ENCODE measurements at regions of chr5 and their contacts with region 1.

Region 1: GRCh38 chr5:152349683-152350526 is 55.2 kb downstream of the NMUR2 start:
- DNase-seq: peak in 3 of 5 donors; percentile 14 to 34 (median 30)
- ATAC-seq: peak; percentile 61 to 87 (median 74)
- H3K4me3 ChIP-seq: no peak overlapping the region
- H3K27ac ChIP-seq: no peak overlapping the region
- H3K4me1 ChIP-seq: peaks cover 0 to 9% (median 0%) of the 10 kb centered on the region in 12 donors
- H3K27me3 ChIP-seq: no peaks in the 10 kb centered on the region
- CTCF ChIP-seq: peak; percentile 65 to 86 (median 78)
- POLR2A ChIP-seq: no peak

Region 2: DNA sequence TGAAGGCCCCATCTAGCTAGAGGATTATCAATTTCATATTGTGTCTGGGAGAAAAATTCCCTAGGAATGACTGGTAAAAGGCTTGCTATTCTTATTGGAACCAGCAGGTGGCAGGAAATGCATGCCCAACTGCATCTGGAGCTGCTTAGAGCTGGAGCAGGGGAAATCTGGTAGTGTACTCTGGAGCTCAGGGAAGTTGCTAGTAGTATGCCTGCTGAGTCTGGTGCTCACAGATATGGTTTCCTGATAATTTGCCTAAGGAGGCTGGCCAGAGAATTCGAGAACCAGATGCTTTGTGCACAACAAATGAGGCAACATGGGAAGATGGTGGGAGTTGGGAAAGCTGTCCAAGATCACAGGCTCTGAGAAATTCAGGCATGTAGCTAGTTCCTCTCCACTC is 524.5 kb before region 1 on chr5:
- intact Hi-C with region 1: loop called in 9 of 10 experiments (anchors 5 to 10 kb)
- DNase-seq: peak in 4 of 5 donors; percentile 44 to 72 (median 56)
- ATAC-seq: peak; percentile 88 to 94 (median 90)
- H3K4me3 ChIP-seq: no peak overlapping the region
- H3K27ac ChIP-seq: no peak overlapping the region
- H3K4me1 ChIP-seq: peaks cover 0 to 17% (median 1%) of the 10 kb centered on the region in 12 donors
- H3K27me3 ChIP-seq: no peaks in the 10 kb centered on the region
- CTCF ChIP-seq: peak; percentile 74 to 93 (median 88)
- POLR2A ChIP-seq: no peak

Region 3: DNA sequence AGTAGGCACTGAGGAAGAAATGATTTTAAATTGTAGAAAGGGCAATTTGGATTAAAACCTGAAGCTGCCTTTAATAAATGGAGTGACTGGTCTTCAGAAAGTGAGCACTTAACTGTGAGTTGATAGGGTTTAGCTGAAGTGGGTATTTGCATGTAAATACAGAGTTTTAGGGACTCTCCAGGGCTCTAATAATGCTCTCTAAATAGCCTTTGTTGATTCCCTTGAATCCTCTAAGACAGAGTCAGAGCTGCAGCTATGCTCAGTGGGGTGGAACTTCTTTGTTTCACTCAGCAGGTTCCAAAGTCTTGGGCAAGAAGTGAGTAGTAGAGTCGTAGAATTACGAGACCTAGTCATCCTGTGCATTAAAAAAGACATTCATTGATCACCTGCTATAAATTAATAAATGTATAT is 446.7 kb before region 1 on chr5:
- intact Hi-C with region 1: no loop called
- DNase-seq: no peak
- ATAC-seq: no peak
- H3K4me3 ChIP-seq: no peak overlapping the region
- H3K27ac ChIP-seq: no peak overlapping the region
- H3K4me1 ChIP-seq: peaks cover 0 to 14% (median 2%) of the 10 kb centered on the region in 12 donors
- H3K27me3 ChIP-seq: no peaks in the 10 kb centered on the region
- CTCF ChIP-seq: no peak
- POLR2A ChIP-seq: no peak

Region 4: DNA sequence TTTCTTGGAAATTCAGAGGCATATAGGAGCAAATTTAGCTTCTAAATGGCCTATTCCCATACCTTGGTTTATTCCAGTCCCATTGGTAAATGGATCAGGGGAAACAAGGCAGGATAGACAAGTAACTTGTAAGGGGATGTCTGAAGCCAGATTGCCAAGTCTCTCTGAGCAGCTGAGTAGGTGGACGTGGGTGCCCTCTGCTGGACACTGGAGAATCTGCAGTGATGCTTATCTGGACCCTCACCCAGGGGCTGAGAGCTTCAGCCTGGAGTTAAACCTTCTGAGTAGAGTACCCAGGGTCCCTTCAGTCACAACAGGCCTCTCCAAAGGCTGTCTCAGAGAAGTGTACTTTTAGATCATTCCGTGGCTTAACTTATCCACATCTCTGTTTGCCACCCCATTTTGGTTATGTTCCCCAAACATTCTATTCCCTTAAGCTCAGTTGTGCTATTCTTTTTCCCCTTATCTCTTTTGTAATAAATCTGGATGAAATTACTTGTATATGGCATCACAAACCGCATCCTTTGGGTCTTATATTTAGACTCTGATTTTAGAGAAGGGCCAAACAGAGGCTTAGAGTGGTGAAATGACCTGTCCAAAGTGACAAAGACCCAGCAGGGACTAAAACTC is 206.9 kb before region 1 on chr5:
- intact Hi-C with region 1: loop called in 4 of 10 experiments (anchors 5 to 10 kb)
- DNase-seq: peak in 4 of 5 donors; percentile 25 to 48 (median 39)
- ATAC-seq: peak in 3 of 4 donors; percentile 68 to 78 (median 73)
- H3K4me3 ChIP-seq: no peak overlapping the region
- H3K27ac ChIP-seq: no peak overlapping the region
- H3K4me1 ChIP-seq: peaks cover 0 to 3% (median 0%) of the 10 kb centered on the region in 12 donors
- H3K27me3 ChIP-seq: no peaks in the 10 kb centered on the region
- CTCF ChIP-seq: peak; percentile 72 to 93 (median 84)
- POLR2A ChIP-seq: no peak

Region 5: GRCh38 chr5:152178350-152178699 is 171.6 kb before region 1 on chr5:
- intact Hi-C with region 1: loop called in 1 of 10 experiments (anchors 5 kb)
- DNase-seq: no peak
- ATAC-seq: no peak
- H3K4me3 ChIP-seq: no peak overlapping the region
- H3K27ac ChIP-seq: no peak overlapping the region
- H3K4me1 ChIP-seq: no peaks in the 10 kb centered on the region
- H3K27me3 ChIP-seq: no peaks in the 10 kb centered on the region
- CTCF ChIP-seq: no peak
- POLR2A ChIP-seq: no peak

Region 6: GRCh38 chr5:152883066-152883775 is 533.3 kb after region 1 on chr5:
- intact Hi-C with region 1: no loop called
- DNase-seq: no peak
- ATAC-seq: no peak
- H3K4me3 ChIP-seq: no peak overlapping the region
- H3K27ac ChIP-seq: no peak overlapping the region
- H3K4me1 ChIP-seq: no peaks in the 10 kb centered on the region
- H3K27me3 ChIP-seq: no peaks in the 10 kb centered on the region
- CTCF ChIP-seq: no peak
- POLR2A ChIP-seq: no peak